ENCODE measurements at regions of chr2 and their contacts with region 1.

Region 1: DNA sequence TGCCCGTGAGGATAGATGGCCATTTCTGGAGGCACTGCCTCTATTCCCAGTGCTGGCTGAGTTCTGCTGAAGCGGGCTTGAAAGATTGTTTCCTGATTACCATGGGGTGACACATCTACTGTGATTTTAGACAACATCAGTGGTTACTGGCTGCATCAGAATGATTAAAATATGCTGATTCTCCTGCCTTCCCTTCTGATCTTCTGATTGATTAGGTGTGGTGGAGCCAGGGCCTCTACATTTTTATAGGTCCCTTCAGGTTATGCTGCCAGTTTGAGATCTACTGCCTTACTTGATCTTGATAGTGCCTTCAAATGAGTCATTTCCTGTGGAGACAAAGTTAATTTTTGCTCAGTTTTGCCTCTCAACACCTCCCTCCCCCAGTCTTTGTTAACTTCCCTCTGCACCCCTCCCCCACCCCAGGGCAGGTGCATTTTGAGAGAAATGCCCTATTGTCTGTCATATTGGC is 31.6 kb upstream of the SNORC start:
- DNase-seq: peak; percentile 46
- H3K4me3 Mint-ChIP-seq: peak overlapping the region; percentile 4
- H3K27ac Mint-ChIP-seq: peak overlapping the region; percentile 72
- H3K4me1 Mint-ChIP-seq: peaks cover 34% of the 10 kb centered on the region
- H3K27me3 Mint-ChIP-seq: no peaks in the 10 kb centered on the region

Region 2: DNA sequence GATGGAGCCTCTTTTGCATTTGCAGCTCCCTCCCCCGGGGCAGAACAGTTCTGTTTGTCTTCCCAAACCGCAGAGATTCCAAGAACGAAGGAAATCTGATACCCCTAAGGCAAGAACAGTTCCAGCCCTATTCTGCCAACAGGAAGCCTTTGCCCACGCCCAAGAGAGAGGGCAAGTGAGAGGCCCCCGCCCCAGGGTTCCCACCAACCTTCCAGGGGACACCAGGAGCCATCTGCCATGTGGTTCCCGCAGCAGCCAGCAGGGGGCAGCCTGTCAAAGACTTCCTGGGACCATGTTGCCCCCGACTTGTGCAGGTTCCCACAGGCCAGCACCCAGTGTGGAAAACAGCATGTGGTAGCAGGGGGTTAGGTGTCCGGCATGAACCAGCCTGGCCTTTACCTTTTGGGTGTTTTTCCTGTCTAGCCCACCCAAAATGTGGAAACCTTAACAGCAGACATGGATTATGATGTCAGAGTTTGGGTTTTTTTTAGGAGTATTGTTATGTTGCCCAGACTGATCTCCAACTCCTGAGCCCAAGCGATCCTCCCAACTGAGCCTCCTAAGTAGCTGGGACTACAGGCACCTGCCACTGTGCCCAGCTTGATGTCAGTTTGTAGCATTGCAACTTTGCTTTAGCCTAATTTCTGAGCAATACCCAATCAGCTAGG is 226.8 kb before region 1 on chr2:
- intact Hi-C with region 1: loop called (anchors 5 kb)
- DNase-seq: peak; percentile 48
- H3K4me3 Mint-ChIP-seq: no peak overlapping the region
- H3K27ac Mint-ChIP-seq: no peak overlapping the region
- H3K4me1 Mint-ChIP-seq: no peaks in the 10 kb centered on the region
- H3K27me3 Mint-ChIP-seq: no peaks in the 10 kb centered on the region

Region 3: DNA sequence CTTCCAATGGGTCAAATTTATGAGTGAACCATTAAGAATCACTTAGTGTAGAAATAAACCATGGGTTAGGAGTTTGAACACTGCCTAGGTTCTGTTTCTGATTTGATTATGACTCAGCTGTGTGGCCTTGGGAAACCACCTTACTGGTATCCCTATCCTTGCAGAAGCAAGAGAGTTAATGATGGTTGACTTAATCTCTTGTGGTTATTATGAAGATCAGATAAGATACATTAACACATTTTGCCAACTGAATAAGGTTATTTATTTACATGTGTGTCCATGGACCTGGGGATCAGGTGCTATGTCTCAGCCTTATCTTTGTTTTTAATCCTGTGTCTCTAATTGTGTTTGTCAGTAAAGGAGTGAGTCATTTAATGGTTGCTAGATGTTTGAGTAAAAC is 56.7 kb before region 1 on chr2:
- intact Hi-C with region 1: loop called (anchors 1 kb)
- DNase-seq: peak; percentile 20
- H3K4me3 Mint-ChIP-seq: no peak overlapping the region
- H3K27ac Mint-ChIP-seq: peak overlapping the region; percentile 78
- H3K4me1 Mint-ChIP-seq: peaks cover 13% of the 10 kb centered on the region
- H3K27me3 Mint-ChIP-seq: no peaks in the 10 kb centered on the region